Activated CD8-positive, alpha-beta T cell treated with anti-CD3 and anti-CD28 coated beads for 36 hours (primary cell): ENCODE measurements at regions of chr11 and their contacts with region 1.

Region 1: DNA sequence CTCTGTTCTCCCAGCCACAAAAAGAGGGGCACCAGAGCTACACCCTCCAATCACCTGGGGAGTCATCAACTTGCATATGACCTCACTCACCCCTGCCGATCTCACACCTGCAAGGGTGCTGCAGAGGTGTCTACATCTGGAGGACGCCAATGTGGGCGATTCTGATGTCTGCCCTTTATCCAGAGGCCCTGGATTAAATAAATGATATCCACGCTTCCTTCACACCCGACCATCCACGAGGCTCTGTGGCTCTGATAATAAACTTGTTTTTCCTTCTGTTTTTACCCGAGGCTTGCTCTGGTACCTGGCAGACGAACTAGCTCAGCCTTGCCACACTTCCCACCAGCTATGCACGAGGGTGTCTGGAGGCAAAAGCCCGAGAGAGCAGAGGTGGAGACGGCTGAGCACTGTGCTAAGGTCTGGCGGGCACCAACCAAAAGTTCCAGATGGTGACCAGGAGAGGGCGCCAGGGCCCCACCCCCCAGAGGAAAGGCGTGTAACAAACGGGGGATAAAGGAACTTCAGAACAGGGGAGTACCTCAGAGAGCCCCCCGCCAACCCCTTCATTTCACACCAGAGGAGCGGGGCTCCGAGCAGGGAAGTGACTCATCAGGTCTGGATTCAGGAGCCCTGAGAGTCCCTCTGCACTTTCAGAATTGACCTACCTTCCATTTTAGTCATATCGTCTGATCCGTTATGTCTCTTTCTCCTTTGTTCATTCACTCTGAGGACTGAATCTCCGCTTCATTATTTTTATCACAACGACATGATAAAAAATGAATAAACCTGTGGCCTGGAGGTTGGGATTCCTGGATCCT is 13.5 kb downstream of the SCN3B start:
- DNase-seq: peak; percentile 67
- ATAC-seq: peak; percentile 96
- H3K4me3 Mint-ChIP-seq: no peak overlapping the region
- H3K27ac Mint-ChIP-seq: no peak overlapping the region
- H3K4me1 Mint-ChIP-seq: peaks cover 1% of the 10 kb centered on the region
- H3K27me3 Mint-ChIP-seq: peaks cover 21% of the 10 kb centered on the region
- CTCF ChIP-seq: peak; percentile 89

Region 2: GRCh38 chr11:123654566-123655081 is 13.7 kb after region 1 on chr11 and contains the start of gene SCN3B:
- CTCF ChIA-PET with region 1: interaction called, 13 read pairs
- POLR2A ChIA-PET with region 1: no interaction called
- intact Hi-C with region 1: no loop called
- DNase-seq: peak; percentile 13
- ATAC-seq: peak; percentile 55
- H3K4me3 Mint-ChIP-seq: peak within 1 kb of the TSS; percentile 41
- H3K27ac Mint-ChIP-seq: no peak within 1 kb of the TSS
- H3K4me1 Mint-ChIP-seq: peaks cover 16% of the 10 kb centered on the region
- H3K27me3 Mint-ChIP-seq: peaks cover 44% of the 10 kb centered on the region
- CTCF ChIP-seq: no peak
- total RNA-seq, gene SCN3B: not detected